Activated T-helper 1 cell treated with anti-CD3 and anti-CD28 coated beads, Interleukin-12 subunit alpha, Interleukin-12 subunit beta, Interleukin-2, Interleukin-4 antibody, amounts not matched to agents 30 ng/mL and 10 ng/mL and 1 ng/mL, durations not matched to agents 14 hours and 24 hours and 36 hours (primary cell): ENCODE measurements at regions of chr3 and their contacts with region 1.

Region 1: DNA sequence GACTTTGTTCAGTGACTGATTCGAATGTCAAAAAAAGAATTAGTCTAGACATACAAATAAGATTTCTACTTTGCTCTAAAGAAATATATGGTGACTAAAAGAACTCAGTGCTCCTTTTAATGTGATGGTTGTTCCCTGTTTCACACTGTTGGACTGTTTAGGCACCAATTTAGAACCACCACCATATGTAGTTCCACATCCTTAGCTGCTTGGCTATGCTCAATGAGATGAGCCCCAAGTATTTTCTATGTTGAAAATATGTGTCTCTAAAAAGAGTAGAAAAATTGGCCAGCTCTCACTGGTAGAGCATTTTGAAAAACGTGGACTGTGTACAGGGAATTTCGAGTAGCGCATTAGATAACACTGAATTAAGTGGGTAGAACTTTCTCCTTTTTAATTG is 167.3 kb downstream of the GOLIM4 start:
- DNase-seq: no peak
- H3K4me3 Mint-ChIP-seq: no peak overlapping the region
- H3K27ac Mint-ChIP-seq: no peak overlapping the region
- H3K4me1 Mint-ChIP-seq: no peaks in the 10 kb centered on the region
- H3K27me3 Mint-ChIP-seq: no peaks in the 10 kb centered on the region

Region 2: DNA sequence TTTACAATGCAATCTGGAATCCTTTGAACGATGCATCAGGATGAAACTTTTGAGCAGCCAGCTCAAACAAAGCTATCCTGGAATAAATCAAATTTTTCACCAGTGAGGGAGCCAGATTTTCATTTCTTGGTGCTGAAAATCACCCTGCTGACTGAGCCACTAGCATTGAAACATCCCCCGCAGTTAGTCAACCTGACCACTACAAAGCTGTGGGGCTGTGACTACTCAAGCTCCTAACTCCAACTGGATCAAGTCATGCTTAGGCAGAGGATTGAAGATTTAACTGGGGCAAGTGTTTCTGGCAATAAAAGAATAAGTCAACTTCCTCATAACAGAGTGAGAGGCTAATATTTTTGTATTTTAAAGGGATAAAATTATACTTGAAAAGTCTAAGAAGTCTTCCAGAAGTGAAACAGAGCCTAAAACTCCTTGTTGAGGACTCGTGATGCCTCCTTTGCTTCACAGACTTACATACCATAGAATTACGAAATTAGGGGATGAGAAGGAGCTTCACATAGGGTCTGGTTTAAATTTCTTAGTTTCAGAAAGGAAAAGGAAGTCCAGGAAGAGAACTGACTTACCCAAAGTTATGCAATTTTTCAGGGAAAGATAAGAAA is 15.1 kb before region 1 on chr3:
- intact Hi-C with region 1: no loop called
- DNase-seq: no peak
- H3K4me3 Mint-ChIP-seq: no peak overlapping the region
- H3K27ac Mint-ChIP-seq: no peak overlapping the region
- H3K4me1 Mint-ChIP-seq: no peaks in the 10 kb centered on the region
- H3K27me3 Mint-ChIP-seq: peaks cover 4% of the 10 kb centered on the region

Region 3: DNA sequence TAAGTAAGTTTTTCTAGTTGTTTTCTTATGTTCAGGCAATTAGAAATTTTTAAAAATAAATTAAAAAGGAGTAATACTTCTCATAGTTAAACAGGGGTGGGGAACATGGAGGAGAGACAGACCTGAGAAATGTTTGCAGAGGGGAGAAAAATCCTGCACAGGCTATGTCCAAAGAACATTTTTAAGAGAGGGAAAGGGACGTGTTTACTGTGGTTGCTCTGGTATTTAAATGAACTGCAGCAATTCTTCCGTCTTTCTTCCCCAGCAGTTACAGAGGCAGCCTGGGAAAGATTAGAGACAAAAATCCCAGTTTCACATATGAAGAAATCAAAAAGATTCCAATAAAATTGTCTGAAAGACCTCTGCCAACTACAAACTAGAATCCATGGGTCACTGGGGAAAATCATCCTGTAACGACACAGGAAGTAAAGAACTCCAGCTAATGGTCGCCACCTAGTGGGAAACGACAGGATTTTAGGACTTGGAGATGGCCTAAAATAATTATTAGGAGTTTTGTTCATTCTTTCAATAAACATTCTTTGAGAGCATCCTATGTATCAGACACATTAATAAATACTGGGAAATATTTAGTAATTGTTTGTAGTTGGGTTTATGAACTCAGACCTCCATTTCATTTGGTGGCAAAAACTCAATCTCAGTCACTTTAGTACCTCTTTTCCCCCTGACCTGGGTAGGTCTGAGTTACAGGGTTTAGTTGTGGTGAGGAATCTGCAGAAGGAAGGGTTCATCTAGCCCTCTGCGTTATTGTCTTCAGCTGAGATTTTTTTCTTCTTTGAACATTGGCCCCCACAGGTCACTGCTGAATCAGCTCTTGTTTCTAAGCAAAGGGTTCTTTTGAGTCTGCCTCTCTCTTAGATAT is 237.2 kb after region 1 on chr3:
- intact Hi-C with region 1: loop called (anchors 1 kb)
- DNase-seq: peak; percentile 1
- H3K4me3 Mint-ChIP-seq: no peak overlapping the region
- H3K27ac Mint-ChIP-seq: no peak overlapping the region
- H3K4me1 Mint-ChIP-seq: no peaks in the 10 kb centered on the region
- H3K27me3 Mint-ChIP-seq: no peaks in the 10 kb centered on the region